ENCODE measurements at regions of chr15 and their contacts with region 1.

Region 1: DNA sequence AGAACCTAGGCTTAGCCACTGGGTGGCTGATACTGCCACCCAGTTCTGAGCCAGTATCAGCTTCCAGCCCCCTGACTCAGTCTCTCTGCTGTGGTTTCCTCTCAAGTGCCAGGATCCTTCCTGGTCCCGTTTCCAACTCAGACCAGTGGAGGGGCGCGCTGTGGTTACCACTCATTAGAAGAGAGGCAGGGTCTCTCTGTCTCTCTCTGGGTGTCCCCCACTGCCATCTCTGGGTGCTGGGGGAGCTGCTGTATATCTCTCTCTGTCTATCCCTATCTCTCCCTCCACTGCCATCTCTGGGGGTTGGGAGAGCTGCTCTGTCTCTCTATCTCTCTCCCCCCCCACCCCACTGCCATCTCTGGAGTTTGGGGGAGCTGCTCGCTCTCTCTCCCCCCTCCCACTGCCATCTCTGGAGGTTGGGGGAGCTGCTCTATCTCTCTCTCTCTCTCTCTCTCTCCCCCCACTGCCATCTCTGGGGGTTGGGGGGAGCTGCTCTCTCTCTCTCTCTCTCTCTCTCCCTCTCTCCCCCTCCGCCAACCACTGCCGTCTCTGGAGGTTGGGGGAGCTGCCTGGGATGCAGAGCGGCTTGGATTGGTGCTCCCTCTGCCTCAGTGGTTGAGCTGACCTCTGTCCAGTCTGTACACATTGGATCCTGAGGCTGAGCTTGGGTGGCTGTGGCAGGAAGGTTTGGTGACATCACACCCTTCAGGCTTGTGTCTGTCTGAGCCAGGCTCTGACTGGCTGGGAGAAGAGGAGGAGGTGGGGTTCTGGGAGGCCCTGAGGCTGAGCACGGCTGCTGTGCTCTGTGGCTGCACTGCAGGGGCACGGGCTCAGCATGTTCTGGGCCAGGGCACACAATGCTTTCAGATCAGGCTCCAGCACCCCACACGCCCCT is 98.9 kb downstream of the APBA2 start:
- DNase-seq: no peak
- ATAC-seq: peak in 3 of 4 donors; percentile 11 to 41 (median 41)
- H3K4me3 ChIP-seq: no peak overlapping the region
- H3K27ac ChIP-seq: no peak overlapping the region
- H3K4me1 ChIP-seq: no peaks in the 10 kb centered on the region
- H3K27me3 ChIP-seq: no peaks in the 10 kb centered on the region
- CTCF ChIP-seq: no peak
- POLR2A ChIP-seq: no peak

Region 2: DNA sequence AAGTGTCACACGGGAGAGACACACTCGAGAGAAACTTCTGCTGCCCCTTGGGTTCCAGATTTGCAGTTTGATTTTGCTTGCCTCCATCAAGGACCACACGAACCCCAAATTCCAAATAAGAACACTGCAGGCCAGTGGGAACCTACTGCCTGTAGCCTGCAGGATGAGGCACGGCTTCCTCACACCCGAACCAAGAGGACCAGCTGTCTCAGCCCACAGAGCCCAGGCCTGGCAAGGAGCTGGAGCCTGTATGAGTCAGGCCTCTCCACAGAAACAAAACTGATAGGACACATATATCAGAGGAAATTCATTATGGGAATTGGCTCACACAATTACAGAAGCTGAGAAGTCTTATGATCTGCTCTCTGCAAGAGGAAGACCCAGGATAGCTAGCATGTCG is 473.1 kb after region 1 on chr15:
- intact Hi-C with region 1: loop called in 1 of 10 experiments (anchors 5 kb)
- DNase-seq: no peak
- ATAC-seq: no peak
- H3K4me3 ChIP-seq: no peak overlapping the region
- H3K27ac ChIP-seq: no peak overlapping the region
- H3K4me1 ChIP-seq: peaks cover 0 to 9% (median 0%) of the 10 kb centered on the region in 12 donors
- H3K27me3 ChIP-seq: peaks cover 0 to 3% (median 0%) of the 10 kb centered on the region in 9 donors
- CTCF ChIP-seq: no peak
- POLR2A ChIP-seq: no peak